MCF 10A (cell line): ENCODE measurements at regions of chr12 and their contacts with region 1.

Region 1: DNA sequence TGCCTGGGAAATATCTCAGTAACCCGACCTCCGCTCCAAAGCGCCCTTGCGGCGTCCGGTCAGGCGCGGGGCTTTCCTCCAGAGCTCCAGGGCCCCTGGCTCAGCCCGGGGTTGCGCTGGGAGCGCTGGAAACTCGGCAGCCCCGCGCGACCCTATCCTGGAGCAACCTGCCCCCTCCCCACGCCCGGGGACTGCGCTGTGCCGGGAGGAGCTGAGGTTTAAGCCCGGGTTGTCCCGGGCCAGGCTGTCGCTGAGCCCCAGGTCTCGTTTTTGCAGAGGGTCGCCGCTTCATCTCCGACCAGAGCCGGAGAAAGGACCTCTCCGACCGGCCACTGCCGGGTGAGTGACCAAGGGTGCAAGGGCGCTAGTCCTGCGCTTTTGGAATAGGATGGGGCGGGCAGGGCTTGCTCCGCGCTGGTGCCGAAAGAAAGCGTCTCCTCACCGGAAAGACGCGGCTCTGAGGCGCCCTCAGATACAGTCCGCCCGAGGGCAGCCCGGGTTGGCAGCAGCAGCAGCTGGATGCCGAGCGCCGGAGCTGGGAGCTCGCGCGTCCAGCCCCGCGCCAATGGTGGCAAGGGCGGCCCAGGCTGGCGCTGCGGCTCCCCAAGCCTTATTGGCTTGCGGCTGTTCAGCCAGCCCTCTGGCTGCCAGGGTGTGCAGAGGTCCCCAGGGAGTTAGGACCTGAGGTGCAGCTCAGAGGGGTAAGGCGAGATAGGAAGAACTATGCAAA is 1.5 kb downstream of the SPX start:
- DNase-seq: peak; percentile 69
- H3K4me3 Mint-ChIP-seq: peak overlapping the region; percentile 82
- H3K27ac Mint-ChIP-seq: peak overlapping the region; percentile 65
- H3K4me1 Mint-ChIP-seq: peaks cover 26% of the 10 kb centered on the region
- H3K27me3 Mint-ChIP-seq: no peaks in the 10 kb centered on the region
- CTCF ChIP-seq: no peak

Region 2: GRCh38 chr12:20624718-20625117 is 902.9 kb before region 1 on chr12:
- CTCF ChIA-PET with region 1: no interaction called
- POLR2A ChIA-PET with region 1: no interaction called
- intact Hi-C with region 1: no loop called
- DNase-seq: peak; percentile 53
- H3K4me3 Mint-ChIP-seq: no peak overlapping the region
- H3K27ac Mint-ChIP-seq: no peak overlapping the region
- H3K4me1 Mint-ChIP-seq: no peaks in the 10 kb centered on the region
- H3K27me3 Mint-ChIP-seq: peaks cover 78% of the 10 kb centered on the region
- CTCF ChIP-seq: peak; percentile 29

Region 3: GRCh38 chr12:21486000-21486399 is 41.6 kb before region 1 on chr12:
- CTCF ChIA-PET with region 1: no interaction called
- POLR2A ChIA-PET with region 1: no interaction called
- intact Hi-C with region 1: no loop called
- DNase-seq: no peak
- H3K4me3 Mint-ChIP-seq: no peak overlapping the region
- H3K27ac Mint-ChIP-seq: no peak overlapping the region
- H3K4me1 Mint-ChIP-seq: no peaks in the 10 kb centered on the region
- H3K27me3 Mint-ChIP-seq: no peaks in the 10 kb centered on the region
- CTCF ChIP-seq: no peak

Region 4: DNA sequence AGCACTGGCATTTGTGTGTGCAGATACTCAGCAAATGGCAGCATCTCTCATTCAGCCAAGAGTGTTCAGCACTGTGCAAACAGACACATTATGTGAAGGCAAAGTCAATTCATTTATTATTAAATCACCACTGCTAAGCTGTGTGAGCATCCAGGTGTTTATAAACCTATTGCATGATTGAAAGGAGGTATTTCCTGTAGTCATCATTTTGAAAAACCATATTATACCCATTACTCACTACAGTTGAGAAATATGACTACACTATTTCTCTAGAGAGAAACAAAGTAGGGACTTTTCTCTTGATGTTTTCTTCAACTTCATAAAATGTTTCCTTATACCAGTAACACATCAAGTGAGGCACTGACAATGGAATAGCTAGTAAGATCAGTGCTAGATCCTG is 12.2 kb after region 1 on chr12:
- CTCF ChIA-PET with region 1: no interaction called
- POLR2A ChIA-PET with region 1: interaction called, 22 read pairs
- intact Hi-C with region 1: no loop called
- DNase-seq: peak; percentile 24
- H3K4me3 Mint-ChIP-seq: no peak overlapping the region
- H3K27ac Mint-ChIP-seq: peak overlapping the region; percentile 57
- H3K4me1 Mint-ChIP-seq: peaks cover 19% of the 10 kb centered on the region
- H3K27me3 Mint-ChIP-seq: no peaks in the 10 kb centered on the region
- CTCF ChIP-seq: no peak

Region 5: GRCh38 chr12:21559855-21560569 is 32.4 kb after region 1 on chr12:
- CTCF ChIA-PET with region 1: interaction called, 3 read pairs
- POLR2A ChIA-PET with region 1: interaction called, 24 read pairs
- intact Hi-C with region 1: no loop called
- DNase-seq: peak; percentile 89
- H3K4me3 Mint-ChIP-seq: peak overlapping the region; percentile 61
- H3K27ac Mint-ChIP-seq: peak overlapping the region; percentile 97
- H3K4me1 Mint-ChIP-seq: peaks cover 15% of the 10 kb centered on the region
- H3K27me3 Mint-ChIP-seq: no peaks in the 10 kb centered on the region
- CTCF ChIP-seq: no peak

Region 6: GRCh38 chr12:21607701-21608100 is 80.1 kb after region 1 on chr12:
- CTCF ChIA-PET with region 1: no interaction called
- POLR2A ChIA-PET with region 1: no interaction called
- intact Hi-C with region 1: no loop called
- DNase-seq: peak; percentile 26
- H3K4me3 Mint-ChIP-seq: no peak overlapping the region
- H3K27ac Mint-ChIP-seq: no peak overlapping the region
- H3K4me1 Mint-ChIP-seq: no peaks in the 10 kb centered on the region
- H3K27me3 Mint-ChIP-seq: no peaks in the 10 kb centered on the region
- CTCF ChIP-seq: peak; percentile 10

Region 7: GRCh38 chr12:21657326-21658077 is 129.9 kb after region 1 on chr12 and contains the start of gene LDHB:
- CTCF ChIA-PET with region 1: no interaction called
- POLR2A ChIA-PET with region 1: interaction called, 6 read pairs
- intact Hi-C with region 1: loop called (anchors 5 kb)
- DNase-seq: peak; percentile 94
- H3K4me3 Mint-ChIP-seq: peak within 1 kb of the TSS; percentile 89
- H3K27ac Mint-ChIP-seq: peak within 1 kb of the TSS; percentile 86
- H3K4me1 Mint-ChIP-seq: peaks cover 26% of the 10 kb centered on the region
- H3K27me3 Mint-ChIP-seq: no peaks in the 10 kb centered on the region
- CTCF ChIP-seq: no peak
- total RNA-seq, gene LDHB: 715 and 788 TPM in 2 replicates

Region 8: DNA sequence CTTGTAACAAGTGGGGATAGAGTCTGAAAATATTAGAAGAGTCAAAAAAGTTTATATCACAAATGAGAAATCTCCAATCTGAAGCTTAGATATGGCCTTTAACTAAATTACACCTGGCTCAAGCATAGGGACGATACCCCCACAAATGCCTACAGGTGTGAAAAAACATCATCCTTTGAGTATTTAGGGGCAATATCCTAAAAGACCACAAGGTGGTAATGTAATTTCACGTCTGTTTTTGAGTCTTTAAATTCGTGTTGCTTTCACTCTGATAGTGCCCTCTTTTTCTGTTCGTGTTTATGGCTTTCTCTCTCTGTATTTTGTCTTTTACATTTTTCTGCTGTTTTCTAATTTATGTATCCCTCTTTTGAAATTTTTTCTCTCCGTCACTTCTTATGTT is 1181.7 kb after region 1 on chr12:
- CTCF ChIA-PET with region 1: no interaction called
- POLR2A ChIA-PET with region 1: no interaction called
- intact Hi-C with region 1: no loop called
- DNase-seq: peak; percentile 38
- H3K4me3 Mint-ChIP-seq: no peak overlapping the region
- H3K27ac Mint-ChIP-seq: no peak overlapping the region
- H3K4me1 Mint-ChIP-seq: no peaks in the 10 kb centered on the region
- H3K27me3 Mint-ChIP-seq: peaks cover 22% of the 10 kb centered on the region
- CTCF ChIP-seq: peak; percentile 38